Body of pancreas (tissue), 4 donors: ENCODE measurements at regions of chr6 and their contacts with region 1.

Region 1: GRCh38 chr6:114304304-114304887 is 38.4 kb downstream of the HS3ST5 start:
- DNase-seq: no peak
- ATAC-seq: no peak
- H3K4me3 ChIP-seq: no peak overlapping the region
- H3K27ac ChIP-seq: no peak overlapping the region
- H3K4me1 ChIP-seq: no peaks in the 10 kb centered on the region
- H3K27me3 ChIP-seq: no peaks in the 10 kb centered on the region
- CTCF ChIP-seq: peak; percentile 13 to 51 (median 37)
- POLR2A ChIP-seq: no peak

Region 2: DNA sequence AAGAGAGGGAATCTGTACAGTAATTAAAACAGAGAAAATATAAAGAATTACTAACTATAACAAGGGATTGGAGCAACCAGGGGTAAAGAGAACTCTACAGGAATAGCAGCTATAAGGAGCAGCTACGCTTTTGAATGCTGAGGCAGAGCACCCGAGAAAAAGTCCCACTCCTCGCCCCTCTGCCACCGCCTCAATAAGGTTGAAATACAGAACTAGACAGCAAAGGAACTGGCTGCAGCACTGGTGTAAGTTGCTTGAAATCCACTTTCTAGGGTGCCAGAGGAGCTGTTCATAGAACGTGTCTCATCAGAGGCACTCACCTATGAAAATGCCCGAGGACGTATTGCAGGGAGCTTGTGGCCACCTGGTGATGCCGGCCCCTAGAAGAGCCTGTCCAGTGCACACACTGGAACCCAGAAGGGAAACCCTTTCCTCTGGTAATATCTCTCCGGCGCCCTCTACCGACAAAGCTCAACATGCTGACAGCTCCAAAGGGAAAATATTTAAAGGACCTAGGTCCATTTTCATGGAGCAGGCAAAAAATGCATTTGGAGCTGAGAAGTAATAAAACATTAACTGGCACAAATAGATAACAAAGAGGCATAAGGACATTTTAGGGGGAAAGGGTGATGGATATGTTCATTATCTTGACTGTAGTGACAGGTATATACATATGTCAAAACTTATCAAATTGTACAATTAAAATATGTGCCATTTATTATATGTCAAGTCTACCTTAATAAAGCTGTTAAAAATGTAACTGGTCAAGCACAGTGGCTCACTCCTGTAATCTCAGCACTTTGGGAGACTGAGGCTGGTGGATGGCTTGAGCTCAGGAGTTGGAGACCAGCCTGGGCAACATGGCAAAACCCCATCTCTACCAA is 196.0 kb before region 1 on chr6:
- intact Hi-C with region 1: loop called (anchors 10 kb)
- DNase-seq: peak; percentile 57 to 80 (median 64)
- ATAC-seq: peak; percentile 53
- H3K4me3 ChIP-seq: no peak overlapping the region
- H3K27ac ChIP-seq: no peak overlapping the region
- H3K4me1 ChIP-seq: no peaks in the 10 kb centered on the region
- H3K27me3 ChIP-seq: no peaks in the 10 kb centered on the region
- CTCF ChIP-seq: peak in 6 of 7 experiments; percentile 29 to 52 (median 37)
- POLR2A ChIP-seq: no peak

Region 3: DNA sequence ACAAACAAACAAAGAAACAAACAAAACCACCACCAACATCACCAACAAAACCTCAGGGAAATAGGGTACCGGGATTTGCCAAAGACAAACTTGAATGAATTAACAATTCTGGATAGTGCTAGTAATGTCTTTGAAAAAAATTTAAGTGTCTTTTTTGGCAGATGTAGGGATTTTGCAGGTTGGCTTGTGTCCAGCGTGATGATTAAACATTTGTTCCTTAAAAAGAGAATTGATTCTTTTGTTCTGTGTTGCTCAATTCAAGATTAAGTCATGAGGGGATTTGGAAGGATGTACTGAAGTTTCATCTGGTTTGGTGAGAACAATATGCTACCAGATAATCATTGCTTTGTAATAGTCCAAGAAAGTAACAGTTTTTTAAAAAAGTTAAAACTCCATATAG is 163.5 kb after region 1 on chr6:
- intact Hi-C with region 1: no loop called
- DNase-seq: no peak
- ATAC-seq: no peak
- H3K4me3 ChIP-seq: no peak overlapping the region
- H3K27ac ChIP-seq: no peak overlapping the region
- H3K4me1 ChIP-seq: no peaks in the 10 kb centered on the region
- H3K27me3 ChIP-seq: no peaks in the 10 kb centered on the region
- CTCF ChIP-seq: no peak
- POLR2A ChIP-seq: no peak

Region 4: GRCh38 chr6:115759051-115759450 is 1454.7 kb after region 1 on chr6:
- intact Hi-C with region 1: no loop called
- DNase-seq: no peak
- ATAC-seq: no peak
- H3K4me3 ChIP-seq: no peak overlapping the region
- H3K27ac ChIP-seq: no peak overlapping the region
- H3K4me1 ChIP-seq: no peaks in the 10 kb centered on the region
- H3K27me3 ChIP-seq: no peaks in the 10 kb centered on the region
- CTCF ChIP-seq: no peak
- POLR2A ChIP-seq: no peak